Activated CD4-positive, alpha-beta T cell treated with anti-CD3 and anti-CD28 coated beads, Interleukin-2, amount 10 ng/mL, durations not matched to agents 24 days and 14 days (primary cell): ENCODE measurements at regions of chr5 and their contacts with region 1.

Region 1: DNA sequence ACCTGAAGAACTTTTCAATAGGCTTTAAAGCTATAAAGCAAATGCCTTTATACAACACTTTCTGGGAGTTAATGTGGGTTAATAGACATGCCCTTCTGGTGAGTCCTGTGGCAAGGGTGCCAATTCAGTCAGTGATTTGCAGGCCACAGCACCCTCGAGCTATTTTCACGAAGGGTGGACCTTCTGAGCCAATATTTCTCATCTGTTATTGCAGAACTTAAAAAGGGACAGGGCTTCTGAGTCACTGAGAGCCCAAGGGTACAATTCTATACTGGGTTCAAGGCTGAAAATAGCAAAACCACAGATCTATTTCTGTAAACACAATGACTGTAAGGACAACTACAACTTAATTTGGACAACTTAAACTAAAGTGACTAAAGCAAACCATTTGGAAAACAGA is 92.8 kb downstream of the GABRG2 start:
- DNase-seq: no peak
- H3K4me3 Mint-ChIP-seq: no peak overlapping the region
- H3K27ac Mint-ChIP-seq: no peak overlapping the region
- H3K4me1 Mint-ChIP-seq: no peaks in the 10 kb centered on the region
- H3K27me3 Mint-ChIP-seq: no peaks in the 10 kb centered on the region

Region 2: DNA sequence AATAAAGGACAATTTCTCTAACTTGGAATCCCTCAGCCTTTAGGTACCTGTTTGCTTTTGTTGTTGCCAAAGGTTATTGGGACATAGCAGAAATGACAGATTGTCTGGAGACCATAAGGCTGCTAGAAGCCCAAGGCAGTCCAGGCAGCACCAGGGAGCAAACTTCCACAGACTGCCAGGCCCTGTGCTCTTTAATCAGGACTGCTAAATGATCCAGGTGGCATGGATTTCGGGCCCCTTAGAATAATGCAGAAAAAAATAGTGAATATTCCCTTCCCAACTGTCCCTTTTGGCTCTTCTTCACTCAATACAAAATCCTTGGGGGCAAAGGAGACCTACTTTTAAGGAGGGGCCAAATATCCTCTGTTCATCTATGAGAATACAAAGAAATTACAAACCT is 238.6 kb before region 1 on chr5:
- intact Hi-C with region 1: no loop called
- DNase-seq: no peak
- H3K4me3 Mint-ChIP-seq: no peak overlapping the region
- H3K27ac Mint-ChIP-seq: no peak overlapping the region
- H3K4me1 Mint-ChIP-seq: no peaks in the 10 kb centered on the region
- H3K27me3 Mint-ChIP-seq: no peaks in the 10 kb centered on the region

Region 3: DNA sequence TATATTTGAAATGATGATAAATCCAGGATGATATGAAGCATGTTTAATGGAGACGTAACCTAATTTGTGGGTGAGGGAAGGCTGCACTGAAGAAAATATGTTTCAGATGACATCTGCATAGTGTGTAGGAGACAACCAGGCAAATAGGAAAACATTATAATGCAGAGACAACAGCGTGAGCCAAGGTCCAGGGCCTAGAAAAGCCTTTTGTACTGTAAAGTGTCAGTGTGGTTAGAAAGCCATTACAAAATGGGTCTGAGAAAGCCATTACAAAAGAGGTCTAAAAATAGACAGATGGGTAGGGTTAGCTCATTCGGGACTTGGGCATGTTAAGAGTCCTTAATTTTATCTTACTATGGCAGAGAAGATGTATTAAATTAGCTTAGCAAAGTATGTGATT is 107.7 kb before region 1 on chr5:
- intact Hi-C with region 1: no loop called
- DNase-seq: no peak
- H3K4me3 Mint-ChIP-seq: no peak overlapping the region
- H3K27ac Mint-ChIP-seq: no peak overlapping the region
- H3K4me1 Mint-ChIP-seq: no peaks in the 10 kb centered on the region
- H3K27me3 Mint-ChIP-seq: no peaks in the 10 kb centered on the region

Region 4: GRCh38 chr5:162174358-162174974 is 14.1 kb after region 1 on chr5:
- intact Hi-C with region 1: loop called (anchors 1 kb)
- DNase-seq: no peak
- H3K4me3 Mint-ChIP-seq: no peak overlapping the region
- H3K27ac Mint-ChIP-seq: no peak overlapping the region
- H3K4me1 Mint-ChIP-seq: no peaks in the 10 kb centered on the region
- H3K27me3 Mint-ChIP-seq: no peaks in the 10 kb centered on the region